CD4-positive, alpha-beta T cell (primary cell): ENCODE measurements at regions of chr22 and their contacts with region 1.

Region 1: GRCh38 chr22:31789803-31790202 is 36.0 kb downstream of the DEPDC5 start:
- DNase-seq: no peak
- ATAC-seq: no peak
- H3K4me3 ChIP-seq: no peak overlapping the region
- H3K4me3 Mint-ChIP-seq: no peak overlapping the region
- H3K27ac ChIP-seq: no peak overlapping the region
- H3K27ac Mint-ChIP-seq: no peak overlapping the region
- H3K4me1 ChIP-seq: no peaks in the 10 kb centered on the region
- H3K4me1 Mint-ChIP-seq: no peaks in the 10 kb centered on the region
- H3K27me3 ChIP-seq: no peaks in the 10 kb centered on the region
- H3K27me3 Mint-ChIP-seq: no peaks in the 10 kb centered on the region
- CTCF ChIP-seq: no peak

Region 2: DNA sequence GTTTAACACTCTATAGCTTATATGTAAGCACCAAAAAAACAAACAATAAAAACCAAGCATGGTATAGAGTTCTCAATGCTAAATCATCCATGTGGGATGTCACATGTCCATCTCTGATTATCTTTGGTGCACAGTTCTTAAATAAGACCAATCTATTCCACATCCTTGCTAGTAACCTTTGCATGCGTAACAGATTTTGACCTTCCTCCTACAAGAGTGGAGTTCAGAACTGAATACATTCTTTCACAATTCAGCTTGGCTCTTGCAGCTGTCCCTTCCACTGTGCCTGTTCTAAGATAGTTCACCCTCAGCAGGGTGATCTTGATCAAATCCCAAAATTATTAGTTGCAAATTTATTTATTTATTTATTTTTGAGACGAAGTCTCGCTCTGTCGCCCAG is 60.9 kb before region 1 on chr22:
- CTCF ChIA-PET with region 1: no interaction called
- POLR2A ChIA-PET with region 1: no interaction called
- intact Hi-C with region 1: loop called in 1 of 2 experiments (anchors 5 kb)
- DNase-seq: no peak
- ATAC-seq: no peak
- H3K4me3 ChIP-seq: no peak overlapping the region
- H3K4me3 Mint-ChIP-seq: no peak overlapping the region
- H3K27ac ChIP-seq: no peak overlapping the region
- H3K27ac Mint-ChIP-seq: no peak overlapping the region
- H3K4me1 ChIP-seq: no peaks in the 10 kb centered on the region
- H3K4me1 Mint-ChIP-seq: peaks cover 6% of the 10 kb centered on the region
- H3K27me3 ChIP-seq: no peaks in the 10 kb centered on the region
- H3K27me3 Mint-ChIP-seq: no peaks in the 10 kb centered on the region
- CTCF ChIP-seq: no peak